ENCODE measurements at regions of chr4 and their contacts with region 1.

Region 1: DNA sequence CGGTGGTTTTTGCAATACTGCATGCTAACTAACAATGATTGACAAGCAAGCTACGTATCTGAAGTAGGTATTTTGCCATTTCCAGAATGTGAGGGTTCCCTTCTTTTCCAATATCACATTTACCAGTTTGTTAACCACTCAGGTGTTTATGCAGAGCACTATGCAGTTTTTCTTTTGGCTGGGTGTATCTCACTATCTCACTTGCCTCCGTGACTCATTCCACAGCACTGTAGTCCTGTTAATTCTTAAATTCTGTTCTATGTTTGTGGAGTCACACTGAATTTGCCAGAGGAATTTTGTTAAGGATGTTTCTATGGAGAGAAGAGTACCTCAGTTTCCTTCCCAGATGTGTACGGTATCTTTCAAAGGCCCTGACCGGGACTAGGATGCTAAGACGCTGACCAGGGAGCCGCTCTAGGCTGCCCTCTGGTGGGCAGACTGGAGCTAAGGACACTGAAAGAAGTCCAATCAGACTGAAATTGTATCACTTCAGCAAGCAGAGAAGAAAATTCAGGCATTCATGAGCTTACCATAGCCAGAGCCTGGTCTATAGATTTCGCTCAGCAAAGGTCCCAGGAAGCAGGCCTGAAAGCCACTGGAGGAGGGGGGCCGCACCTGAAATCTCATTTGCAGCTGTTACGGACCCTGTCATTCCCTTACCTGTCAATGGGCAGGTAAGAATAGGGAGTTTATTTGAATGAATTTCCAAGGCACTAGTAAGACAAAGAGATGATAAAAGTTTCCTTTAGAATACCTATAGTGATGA is 388.4 kb upstream of the SPOCK3 start:
- DNase-seq: peak; percentile 77
- H3K4me3 Mint-ChIP-seq: no peak overlapping the region
- H3K27ac Mint-ChIP-seq: no peak overlapping the region
- H3K4me1 Mint-ChIP-seq: no peaks in the 10 kb centered on the region
- H3K27me3 Mint-ChIP-seq: no peaks in the 10 kb centered on the region

Region 2: DNA sequence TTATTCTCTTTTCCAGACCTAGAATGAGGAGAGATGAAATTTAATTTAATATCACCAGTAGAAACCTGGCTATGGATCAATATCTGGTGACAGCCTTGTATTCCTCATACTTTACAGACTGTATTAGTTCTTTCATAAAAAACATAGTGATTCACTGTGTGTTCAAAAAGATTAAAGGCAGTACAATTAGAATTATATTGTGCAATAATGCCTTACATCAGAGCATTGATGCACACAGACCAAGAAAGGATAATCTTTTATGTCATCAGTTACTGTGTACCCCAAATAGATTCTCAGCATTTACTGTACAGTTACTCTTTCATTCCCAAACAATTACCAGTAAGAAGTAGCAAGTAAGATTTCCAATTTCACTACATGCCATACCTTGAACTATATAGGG is 209.2 kb after region 1 on chr4:
- intact Hi-C with region 1: no loop called
- DNase-seq: no peak
- H3K4me3 Mint-ChIP-seq: no peak overlapping the region
- H3K27ac Mint-ChIP-seq: no peak overlapping the region
- H3K4me1 Mint-ChIP-seq: no peaks in the 10 kb centered on the region
- H3K27me3 Mint-ChIP-seq: no peaks in the 10 kb centered on the region

Region 3: GRCh38 chr4:168076989-168077725 is 454.5 kb after region 1 on chr4:
- intact Hi-C with region 1: loop called (anchors 2 kb)
- DNase-seq: peak; percentile 78
- H3K4me3 Mint-ChIP-seq: no peak overlapping the region
- H3K27ac Mint-ChIP-seq: no peak overlapping the region
- H3K4me1 Mint-ChIP-seq: no peaks in the 10 kb centered on the region
- H3K27me3 Mint-ChIP-seq: no peaks in the 10 kb centered on the region